Activated CD8-positive, alpha-beta T cell treated with anti-CD3 and anti-CD28 coated beads, Interleukin-2, amount 10 ng/mL, durations not matched to agents 7 days and 5 days (primary cell): ENCODE measurements at regions of chr17 and their contacts with region 1.

Region 1: DNA sequence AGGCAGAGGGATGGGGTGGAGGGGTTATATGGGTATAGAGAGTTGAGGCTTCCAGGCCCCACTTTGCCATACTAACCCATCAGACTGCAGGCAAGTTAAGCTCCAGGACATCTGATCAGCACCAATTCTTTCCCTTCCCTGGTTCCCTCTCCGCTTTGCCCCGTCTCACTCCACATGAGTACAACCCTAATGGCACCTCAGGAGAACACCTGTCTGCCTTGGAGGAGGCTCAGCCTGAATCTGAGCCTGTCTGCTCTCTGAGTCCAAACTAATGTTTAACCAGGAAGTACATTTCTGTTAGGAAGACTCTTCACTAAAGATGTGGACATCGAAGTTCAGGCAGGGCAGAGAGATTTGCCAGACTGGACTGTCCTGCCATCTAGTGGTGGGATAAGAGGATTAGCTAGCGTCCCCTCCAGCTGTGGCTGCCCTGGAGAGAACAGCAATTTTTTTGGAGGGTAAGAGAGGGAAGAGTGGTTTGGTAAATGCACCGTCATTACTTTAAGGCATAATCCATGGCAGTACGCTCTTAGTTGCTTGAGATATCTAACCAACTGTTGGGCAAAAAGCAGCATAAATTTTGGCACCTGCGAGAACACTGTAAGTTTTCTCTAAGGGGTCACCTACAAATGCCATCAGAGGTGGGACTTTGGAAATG is 29.2 kb upstream of the LRRC75A start:
- DNase-seq: peak; percentile 81
- ATAC-seq: peak; percentile 98
- H3K4me3 Mint-ChIP-seq: no peak overlapping the region
- H3K27ac Mint-ChIP-seq: peak overlapping the region; percentile 56
- H3K4me1 Mint-ChIP-seq: peaks cover 3% of the 10 kb centered on the region
- H3K27me3 Mint-ChIP-seq: peaks cover 22% of the 10 kb centered on the region

Region 2: DNA sequence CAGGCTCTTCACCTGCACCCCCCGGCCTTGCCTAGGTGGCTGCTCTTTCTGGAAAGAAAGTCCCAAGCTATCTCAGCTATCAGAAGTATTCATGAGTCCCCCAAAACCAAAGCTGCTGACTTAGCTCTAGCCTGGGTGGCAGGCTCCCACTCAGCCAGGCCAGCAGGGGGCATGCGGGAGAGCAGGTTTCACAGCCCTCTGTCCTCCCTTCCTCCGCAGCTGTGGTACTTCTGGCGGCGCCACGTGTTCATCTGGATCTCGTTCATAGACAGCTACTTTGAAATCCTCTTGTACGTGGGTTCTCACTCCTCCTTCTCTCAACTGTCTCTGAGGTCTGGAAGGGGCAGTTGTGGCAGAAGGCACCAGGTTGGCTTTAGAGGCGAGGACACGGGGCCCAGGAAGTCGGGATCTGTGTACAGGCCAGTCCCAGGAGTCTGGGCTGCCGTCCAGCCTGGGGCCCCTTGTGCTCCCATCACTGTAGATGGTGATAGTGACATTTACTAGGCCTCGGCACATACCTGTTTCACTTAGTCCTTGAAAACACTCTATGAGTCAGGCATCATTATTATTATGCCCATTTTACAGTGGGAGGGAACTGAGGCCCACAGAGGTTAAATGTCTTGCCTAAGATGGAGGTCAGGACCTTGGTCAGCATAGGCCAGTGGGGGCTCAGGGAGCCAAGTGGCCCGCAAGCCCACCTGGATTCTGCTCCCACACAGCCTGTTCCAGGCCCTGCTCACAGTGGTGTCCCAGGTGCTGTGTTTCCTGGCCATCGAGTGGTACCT is 92.9 kb before region 1 on chr17:
- CTCF ChIA-PET with region 1: interaction called, 20 read pairs
- POLR2A ChIA-PET with region 1: no interaction called
- DNase-seq: peak; percentile 60
- ATAC-seq: peak; percentile 82
- H3K4me3 Mint-ChIP-seq: no peak overlapping the region
- H3K27ac Mint-ChIP-seq: no peak overlapping the region
- H3K4me1 Mint-ChIP-seq: no peaks in the 10 kb centered on the region
- H3K27me3 Mint-ChIP-seq: no peaks in the 10 kb centered on the region

Region 3: GRCh38 chr17:16449121-16449570 is 72.1 kb before region 1 on chr17:
- CTCF ChIA-PET with region 1: interaction called, 111 read pairs
- POLR2A ChIA-PET with region 1: no interaction called
- DNase-seq: no peak
- ATAC-seq: no peak
- H3K4me3 Mint-ChIP-seq: no peak overlapping the region
- H3K27ac Mint-ChIP-seq: no peak overlapping the region
- H3K4me1 Mint-ChIP-seq: peaks cover 28% of the 10 kb centered on the region
- H3K27me3 Mint-ChIP-seq: no peaks in the 10 kb centered on the region

Region 4: DNA sequence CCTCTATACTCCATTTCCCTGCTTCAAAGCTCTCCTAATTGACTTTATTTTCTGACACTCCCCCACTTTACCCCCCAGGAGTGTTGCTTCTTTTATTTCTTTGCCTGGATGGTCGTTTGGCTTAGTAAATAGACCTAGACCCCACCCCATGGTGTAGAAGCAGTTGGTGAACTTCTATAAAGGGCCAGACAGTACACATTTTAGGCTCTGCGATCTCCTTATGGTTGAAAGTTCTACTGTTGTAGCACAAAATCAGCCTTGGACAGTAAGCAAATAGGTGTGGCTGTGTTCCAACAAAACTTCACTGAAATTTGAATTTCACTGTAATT is 15.9 kb after region 1 on chr17:
- CTCF ChIA-PET with region 1: interaction called, 17 read pairs
- POLR2A ChIA-PET with region 1: no interaction called
- DNase-seq: no peak
- ATAC-seq: no peak
- H3K4me3 Mint-ChIP-seq: peak overlapping the region; percentile 95
- H3K27ac Mint-ChIP-seq: peak overlapping the region; percentile 99
- H3K4me1 Mint-ChIP-seq: peaks cover 30% of the 10 kb centered on the region
- H3K27me3 Mint-ChIP-seq: no peaks in the 10 kb centered on the region